A673 (cell line): ENCODE measurements at regions of chr6 and their contacts with region 1.

Region 1: GRCh38 chr6:36759148-36759759 is 61.6 kb downstream of the RAB44 start:
- DNase-seq: peak; percentile 81
- H3K4me3 ChIP-seq: no peak overlapping the region
- H3K27ac ChIP-seq: no peak overlapping the region
- H3K4me1 ChIP-seq: no peaks in the 10 kb centered on the region
- H3K27me3 ChIP-seq: no peaks in the 10 kb centered on the region
- CTCF ChIP-seq: peak; percentile 98

Region 2: GRCh38 chr6:36423101-36423824 is 336.0 kb before region 1 on chr6:
- CTCF ChIA-PET with region 1: interaction called, 3 read pairs
- POLR2A ChIA-PET with region 1: no interaction called
- intact Hi-C with region 1: loop called (anchors 5 kb)
- DNase-seq: peak; percentile 99
- H3K4me3 ChIP-seq: peak overlapping the region; percentile 42
- H3K27ac ChIP-seq: peak overlapping the region; percentile 55
- H3K4me1 ChIP-seq: peaks cover 9% of the 10 kb centered on the region
- H3K27me3 ChIP-seq: no peaks in the 10 kb centered on the region
- CTCF ChIP-seq: peak; percentile 62

Region 3: DNA sequence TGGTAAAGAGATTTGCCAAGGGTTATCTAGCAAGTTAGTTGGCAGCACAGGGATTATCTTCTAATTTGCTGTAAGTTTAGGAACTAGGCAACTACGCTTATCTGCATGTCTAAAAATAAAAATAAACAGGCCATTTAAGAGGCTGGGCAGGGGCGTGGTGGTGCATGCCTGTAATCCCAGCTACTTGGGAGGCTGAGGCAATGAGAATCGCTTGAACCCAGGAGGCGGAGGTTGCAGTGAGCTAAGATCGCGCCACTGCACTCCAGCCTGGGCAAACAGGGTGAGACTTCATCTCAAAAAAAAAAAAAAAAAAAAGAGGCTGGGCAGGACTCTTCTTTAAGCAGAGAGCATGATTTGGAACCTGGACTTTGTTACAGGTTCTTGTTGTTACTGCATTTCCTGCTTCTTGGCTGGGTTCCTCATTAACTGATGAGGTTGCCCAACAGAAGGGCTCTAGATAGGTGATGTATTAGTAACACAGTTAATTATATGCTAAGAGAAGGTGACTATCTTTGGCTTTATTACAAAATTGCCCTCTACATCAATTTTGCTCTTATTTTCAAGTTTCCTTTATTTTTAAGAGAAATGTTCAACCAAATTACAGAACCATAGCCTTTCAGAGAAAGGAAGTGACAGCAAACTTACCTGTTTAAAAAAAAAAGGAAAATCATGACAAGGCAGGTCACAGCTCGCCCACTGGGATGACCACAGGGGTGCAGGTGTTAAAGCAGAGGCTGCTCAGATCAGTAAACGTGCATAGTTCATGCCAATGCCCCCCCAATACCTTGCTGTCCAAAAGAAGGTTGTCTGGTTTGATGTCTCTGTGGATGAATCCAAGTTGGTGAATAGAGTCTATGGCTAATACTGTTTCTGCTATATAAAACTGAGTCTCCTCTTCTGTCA is 244.4 kb before region 1 on chr6:
- CTCF ChIA-PET with region 1: no interaction called
- POLR2A ChIA-PET with region 1: no interaction called
- intact Hi-C with region 1: no loop called
- DNase-seq: no peak
- H3K4me3 ChIP-seq: no peak overlapping the region
- H3K27ac ChIP-seq: no peak overlapping the region
- H3K4me1 ChIP-seq: no peaks in the 10 kb centered on the region
- H3K27me3 ChIP-seq: no peaks in the 10 kb centered on the region
- CTCF ChIP-seq: no peak

Region 4: GRCh38 chr6:36615018-36615761 is 144.1 kb before region 1 on chr6:
- CTCF ChIA-PET with region 1: interaction called, 7 read pairs
- POLR2A ChIA-PET with region 1: no interaction called
- intact Hi-C with region 1: loop called (anchors 2 kb)
- DNase-seq: peak; percentile 75
- H3K4me3 ChIP-seq: no peak overlapping the region
- H3K27ac ChIP-seq: no peak overlapping the region
- H3K4me1 ChIP-seq: no peaks in the 10 kb centered on the region
- H3K27me3 ChIP-seq: no peaks in the 10 kb centered on the region
- CTCF ChIP-seq: peak; percentile 82

Region 5: GRCh38 chr6:36623547-36624459 is 135.5 kb before region 1 on chr6:
- CTCF ChIA-PET with region 1: no interaction called
- POLR2A ChIA-PET with region 1: no interaction called
- intact Hi-C with region 1: loop called (anchors 1 kb)
- DNase-seq: peak; percentile 88
- H3K4me3 ChIP-seq: no peak overlapping the region
- H3K27ac ChIP-seq: no peak overlapping the region
- H3K4me1 ChIP-seq: no peaks in the 10 kb centered on the region
- H3K27me3 ChIP-seq: no peaks in the 10 kb centered on the region
- CTCF ChIP-seq: peak; percentile 93

Region 6: GRCh38 chr6:36780442-36781177 is 21.4 kb after region 1 on chr6:
- CTCF ChIA-PET with region 1: interaction called, 10 read pairs
- POLR2A ChIA-PET with region 1: no interaction called
- intact Hi-C with region 1: no loop called
- DNase-seq: no peak
- H3K4me3 ChIP-seq: no peak overlapping the region
- H3K27ac ChIP-seq: no peak overlapping the region
- H3K4me1 ChIP-seq: no peaks in the 10 kb centered on the region
- H3K27me3 ChIP-seq: no peaks in the 10 kb centered on the region
- CTCF ChIP-seq: no peak

Region 7: DNA sequence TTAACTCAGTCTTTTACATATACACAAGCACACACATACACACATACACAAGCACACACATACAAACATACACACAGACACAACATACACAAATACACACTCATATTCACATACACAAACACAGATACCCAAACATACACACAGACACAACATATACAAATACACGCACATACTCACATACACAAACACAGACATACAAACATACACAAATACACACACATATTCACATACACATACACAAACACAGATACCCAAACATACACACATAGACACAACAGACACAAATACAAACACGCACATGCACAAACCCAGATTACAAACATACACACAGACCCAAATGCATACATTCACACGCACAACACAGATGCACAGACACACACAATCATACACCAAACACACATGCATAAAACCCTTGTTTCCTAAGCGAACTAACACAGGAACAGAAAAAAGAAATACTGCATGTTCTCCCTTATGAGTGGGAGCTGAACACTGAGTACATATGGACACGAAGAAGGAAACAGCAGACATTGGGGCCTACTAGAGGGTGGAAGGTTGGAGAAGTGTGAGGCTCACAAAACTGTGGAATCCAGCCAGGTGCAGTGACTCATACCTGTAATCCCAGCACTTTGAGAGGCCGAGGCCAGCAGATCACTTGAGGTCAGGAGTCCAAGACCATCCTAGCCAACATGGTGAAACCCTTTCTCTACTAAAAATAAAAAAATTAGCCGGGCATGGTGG is 444.9 kb after region 1 on chr6:
- CTCF ChIA-PET with region 1: no interaction called
- POLR2A ChIA-PET with region 1: no interaction called
- intact Hi-C with region 1: no loop called
- DNase-seq: no peak
- H3K4me3 ChIP-seq: no peak overlapping the region
- H3K27ac ChIP-seq: no peak overlapping the region
- H3K4me1 ChIP-seq: no peaks in the 10 kb centered on the region
- H3K27me3 ChIP-seq: no peaks in the 10 kb centered on the region
- CTCF ChIP-seq: no peak

Region 8: GRCh38 chr6:37314487-37315156 is 555.4 kb after region 1 on chr6:
- CTCF ChIA-PET with region 1: no interaction called
- POLR2A ChIA-PET with region 1: no interaction called
- intact Hi-C with region 1: no loop called
- DNase-seq: peak; percentile 43
- H3K4me3 ChIP-seq: no peak overlapping the region
- H3K27ac ChIP-seq: no peak overlapping the region
- H3K4me1 ChIP-seq: no peaks in the 10 kb centered on the region
- H3K27me3 ChIP-seq: no peaks in the 10 kb centered on the region
- CTCF ChIP-seq: peak; percentile 71